ENCODE measurements at regions of chr2 and their contacts with region 1.

Region 1: DNA sequence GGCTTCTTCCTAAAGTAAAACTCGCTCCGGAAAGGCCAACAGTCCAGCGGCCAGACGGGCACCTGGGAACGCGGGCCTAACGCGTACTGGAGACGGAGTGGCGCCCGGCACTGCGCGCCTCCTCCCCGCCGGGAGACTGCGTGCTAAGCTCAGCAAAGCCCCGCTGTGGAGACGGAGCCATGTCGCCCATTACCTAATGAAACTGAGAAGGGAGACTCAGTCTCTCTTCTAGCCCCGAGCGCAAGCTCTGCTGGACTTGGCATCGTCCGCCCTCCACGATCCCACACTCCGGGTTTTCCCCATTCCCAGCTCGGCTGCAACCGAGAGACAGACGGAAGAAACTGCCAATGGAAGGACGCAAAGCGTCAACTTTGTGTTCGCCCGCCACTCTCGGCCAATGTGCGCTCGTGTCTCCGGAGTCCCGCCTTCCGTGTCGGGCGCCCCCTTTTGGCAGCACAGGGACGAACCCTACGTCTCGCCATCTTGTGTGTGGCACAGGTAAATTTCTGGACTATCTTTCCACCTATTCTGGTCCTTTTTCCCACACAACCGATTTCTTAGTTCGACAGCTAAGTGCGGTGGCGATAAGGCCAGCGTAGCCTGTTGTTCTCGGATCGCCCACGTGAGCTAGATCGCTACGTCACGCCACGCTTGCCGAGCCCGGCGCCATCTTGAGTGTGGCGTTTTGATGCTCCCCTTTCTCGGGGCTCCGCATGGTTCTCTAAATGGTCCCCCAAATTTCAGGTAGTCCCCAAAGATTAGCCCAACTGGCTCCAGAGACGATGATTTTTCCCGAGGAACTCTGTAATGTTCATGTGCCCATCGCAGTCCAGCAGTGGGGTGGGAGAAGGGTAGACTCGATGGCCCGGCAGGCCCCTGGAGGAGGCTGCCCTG is 1.3 kb upstream of the PTMA start:
- DNase-seq: peak; percentile 99

Region 2: GRCh38 chr2:231514103-231514950 is 192.7 kb before region 1 on chr2:
- intact Hi-C with region 1: loop called (anchors 10 kb)
- DNase-seq: peak; percentile 98

Region 3: GRCh38 chr2:231612179-231613053 is 94.6 kb before region 1 on chr2:
- intact Hi-C with region 1: loop called (anchors 1 kb)
- DNase-seq: peak; percentile 94

Region 4: DNA sequence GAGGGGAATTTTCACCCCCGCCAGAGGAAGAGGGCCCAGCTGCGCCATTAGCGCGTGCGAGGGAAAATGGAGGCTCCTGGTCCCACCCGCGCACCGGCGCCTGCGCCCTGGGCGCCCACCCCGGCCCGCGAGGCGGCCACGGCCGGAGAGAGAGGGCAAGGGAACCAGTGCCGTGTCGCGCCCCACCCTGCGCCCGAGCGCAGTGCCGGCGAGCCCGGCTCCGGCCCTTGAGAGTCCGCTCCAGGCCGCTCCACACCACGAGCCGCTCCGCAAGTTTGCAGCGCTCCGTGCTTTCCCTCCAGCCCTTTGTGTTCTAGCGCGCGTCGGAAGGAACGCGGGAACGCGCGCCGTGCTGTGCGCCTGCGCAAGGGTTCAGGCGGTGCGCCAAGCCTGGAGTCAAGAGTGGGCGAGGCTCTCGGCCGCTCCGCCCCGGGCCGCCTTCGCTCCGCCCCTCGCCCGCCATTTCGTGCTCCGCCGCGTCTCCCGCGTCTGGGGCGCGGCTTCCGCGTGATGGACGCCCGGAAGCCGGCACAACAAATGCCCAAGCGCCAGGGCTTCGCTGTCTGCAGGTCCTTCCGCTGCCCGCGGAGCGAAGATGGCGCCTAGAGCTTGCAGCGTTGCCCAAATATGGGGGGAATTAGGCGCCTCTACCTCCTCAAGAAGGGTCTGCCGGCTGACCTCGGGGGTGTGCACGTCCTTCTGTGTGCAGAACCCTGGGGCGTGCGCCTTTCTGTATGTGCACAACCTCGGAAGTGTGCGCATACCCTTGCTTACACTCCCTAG is 44.8 kb before region 1 on chr2:
- intact Hi-C with region 1: loop called (anchors 1 kb)
- DNase-seq: peak; percentile 99

Region 5: DNA sequence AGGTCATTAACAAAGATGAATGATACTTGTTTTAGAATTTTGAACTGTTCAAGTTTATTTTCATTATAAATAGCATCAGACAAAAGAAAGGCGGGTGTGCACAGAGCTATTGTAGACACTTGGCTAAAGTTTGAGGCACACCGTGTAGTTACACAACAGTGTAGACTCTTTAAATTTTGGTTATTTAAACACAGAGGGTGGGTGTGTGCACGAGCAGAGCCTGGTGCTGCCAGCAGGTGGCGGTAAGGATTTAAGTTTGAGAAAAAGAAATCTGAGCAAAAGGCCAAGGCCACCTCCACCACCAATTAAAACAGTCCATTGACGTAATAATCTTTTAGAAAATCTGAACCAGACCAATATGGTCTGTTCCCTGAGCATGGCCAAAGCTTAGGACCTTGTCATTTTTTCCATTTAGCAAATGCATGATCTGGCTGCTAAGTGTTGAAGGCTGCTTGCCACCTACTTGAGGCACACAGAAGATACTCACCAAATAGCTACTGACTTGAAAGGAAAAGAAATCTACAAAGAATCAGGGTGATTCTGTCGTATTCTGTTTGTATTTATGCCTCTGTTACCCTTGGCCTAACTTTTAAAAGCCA is 93.6 kb after region 1 on chr2:
- intact Hi-C with region 1: no loop called
- DNase-seq: no peak

Measured in cardiac septum (tissue), 1 donor.